ENCODE measurements at regions of chr6 and their contacts with region 1.

Region 1: GRCh38 chr6:39302669-39303424 is 11.4 kb downstream of the KCNK17 start:
- H3K4me3 Mint-ChIP-seq: no peak overlapping the region
- H3K27ac Mint-ChIP-seq: peak overlapping the region; percentile 8
- H3K4me1 Mint-ChIP-seq: peaks cover 27% of the 10 kb centered on the region
- H3K27me3 Mint-ChIP-seq: peaks cover 29% of the 10 kb centered on the region

Region 2: GRCh38 chr6:39088331-39088730 is 214.5 kb before region 1 on chr6:
- intact Hi-C with region 1: loop called (anchors 10 kb)
- H3K4me3 Mint-ChIP-seq: no peak overlapping the region
- H3K27ac Mint-ChIP-seq: no peak overlapping the region
- H3K4me1 Mint-ChIP-seq: peaks cover 15% of the 10 kb centered on the region
- H3K27me3 Mint-ChIP-seq: peaks cover 60% of the 10 kb centered on the region

Region 3: GRCh38 chr6:39166189-39166911 is 136.5 kb before region 1 on chr6:
- intact Hi-C with region 1: loop called (anchors 1 kb)
- H3K4me3 Mint-ChIP-seq: no peak overlapping the region
- H3K27ac Mint-ChIP-seq: no peak overlapping the region
- H3K4me1 Mint-ChIP-seq: peaks cover 16% of the 10 kb centered on the region
- H3K27me3 Mint-ChIP-seq: peaks cover 20% of the 10 kb centered on the region